ENCODE measurements at regions of chr3 and their contacts with region 1.

Region 1: DNA sequence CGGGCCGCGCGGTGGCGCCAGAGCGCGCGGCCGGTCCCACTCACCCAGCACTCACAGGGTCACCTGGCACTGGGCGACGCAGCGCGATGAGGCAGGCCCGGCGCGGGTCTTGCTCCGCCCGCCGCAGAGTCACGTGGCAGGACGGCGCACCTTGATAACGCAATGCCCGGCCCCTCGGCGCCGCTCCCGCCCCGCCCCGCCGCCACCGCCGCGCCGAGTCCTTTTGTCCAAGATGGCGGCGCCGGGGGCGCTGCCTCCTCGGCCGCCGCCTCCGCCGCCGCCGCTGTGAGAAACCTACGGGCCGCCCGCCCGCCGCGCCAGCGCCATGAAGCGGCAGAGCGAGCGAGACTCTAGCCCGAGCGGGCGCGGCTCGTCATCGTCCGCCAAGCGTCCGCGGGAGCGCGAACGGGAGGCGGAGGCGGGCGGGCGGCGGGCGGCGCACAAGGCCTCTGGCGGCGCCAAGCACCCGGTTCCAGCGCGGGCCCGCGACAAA is at the start of gene RBM15B:
- DNase-seq: peak; percentile 99
- total RNA-seq, gene RBM15B: 18.1 TPM

Region 2: GRCh38 chr3:50568947-50569749 is 822.0 kb before region 1 on chr3 and contains the start of gene HEMK1:
- intact Hi-C with region 1: loop called (anchors 5 kb)
- DNase-seq: peak; percentile 98
- total RNA-seq, gene HEMK1: 14.4 TPM

Region 3: GRCh38 chr3:51682079-51682478 is 291.0 kb after region 1 on chr3:
- intact Hi-C with region 1: loop called (anchors 5 kb)
- DNase-seq: no peak

Measured in cardiac septum (tissue), 1 donor.